CD8-positive, alpha-beta T cell (primary cell): ENCODE measurements at regions of chr20 and their contacts with region 1.

Region 1: DNA sequence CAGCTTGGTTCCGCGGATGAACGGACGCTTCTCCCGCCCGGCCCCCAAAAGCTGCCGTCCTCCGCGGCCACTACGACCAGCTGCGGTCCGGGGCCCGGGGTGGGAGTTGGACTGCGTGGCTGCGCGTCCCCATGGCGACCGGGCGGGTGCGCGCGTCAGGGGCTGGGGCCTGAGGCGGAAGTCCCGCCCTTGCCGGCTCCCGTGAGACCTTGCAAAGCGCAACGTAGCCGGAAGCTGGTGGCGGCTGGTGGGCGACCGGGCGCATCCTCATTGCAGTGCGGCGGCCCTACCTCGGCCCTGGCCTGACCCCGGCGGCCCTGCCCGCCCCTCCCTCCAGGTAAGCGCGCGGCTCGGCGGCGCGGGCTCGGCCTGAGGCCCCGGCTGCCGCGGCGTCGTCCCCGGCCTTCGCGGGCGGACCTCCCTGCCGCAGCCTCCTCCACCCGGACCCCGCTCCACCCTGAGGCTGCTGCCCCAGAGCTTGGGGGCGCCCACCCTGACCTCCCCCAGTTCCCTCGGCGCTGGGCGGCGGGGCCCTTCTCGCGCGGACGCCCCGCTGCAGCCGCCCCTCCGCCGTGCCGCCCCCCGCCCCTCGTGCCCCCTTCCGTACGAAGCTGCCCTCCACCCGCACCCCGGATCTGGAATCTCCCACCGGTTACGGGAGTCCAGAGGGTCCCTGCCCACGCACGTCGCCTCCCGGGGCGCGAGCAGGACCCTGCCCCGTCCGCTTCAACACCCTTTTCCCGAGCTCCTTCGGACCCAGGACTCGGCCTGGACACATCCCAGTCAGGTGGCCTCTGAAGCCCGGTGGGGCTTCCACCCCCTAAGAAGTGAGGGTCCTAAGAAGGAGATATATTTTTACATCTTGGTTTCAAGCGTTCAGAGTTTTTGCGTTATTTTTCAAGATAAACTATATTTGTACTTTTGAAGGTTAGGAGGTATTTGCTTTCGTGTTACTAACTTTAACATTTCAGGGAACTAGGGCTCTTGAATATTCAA is at the start of gene ARFGAP1:
- DNase-seq: peak; percentile 71 to 93 (median 89)
- ATAC-seq: peak; percentile 93
- H3K4me3 ChIP-seq: peak within 1 kb of the TSS; percentile 61 to 78
- H3K4me3 Mint-ChIP-seq: peak within 1 kb of the TSS; percentile 87
- H3K27ac ChIP-seq: peak within 1 kb of the TSS; percentile 54 to 63
- H3K27ac Mint-ChIP-seq: peak within 1 kb of the TSS; percentile 83
- H3K4me1 ChIP-seq: peaks cover 18% of the 10 kb centered on the region
- H3K4me1 Mint-ChIP-seq: peaks cover 35% of the 10 kb centered on the region
- H3K27me3 ChIP-seq: no peaks in the 10 kb centered on the region
- H3K27me3 Mint-ChIP-seq: no peaks in the 10 kb centered on the region
- CTCF ChIP-seq: no peak
- total RNA-seq, gene ARFGAP1: 121 to 123 TPM

Region 2: DNA sequence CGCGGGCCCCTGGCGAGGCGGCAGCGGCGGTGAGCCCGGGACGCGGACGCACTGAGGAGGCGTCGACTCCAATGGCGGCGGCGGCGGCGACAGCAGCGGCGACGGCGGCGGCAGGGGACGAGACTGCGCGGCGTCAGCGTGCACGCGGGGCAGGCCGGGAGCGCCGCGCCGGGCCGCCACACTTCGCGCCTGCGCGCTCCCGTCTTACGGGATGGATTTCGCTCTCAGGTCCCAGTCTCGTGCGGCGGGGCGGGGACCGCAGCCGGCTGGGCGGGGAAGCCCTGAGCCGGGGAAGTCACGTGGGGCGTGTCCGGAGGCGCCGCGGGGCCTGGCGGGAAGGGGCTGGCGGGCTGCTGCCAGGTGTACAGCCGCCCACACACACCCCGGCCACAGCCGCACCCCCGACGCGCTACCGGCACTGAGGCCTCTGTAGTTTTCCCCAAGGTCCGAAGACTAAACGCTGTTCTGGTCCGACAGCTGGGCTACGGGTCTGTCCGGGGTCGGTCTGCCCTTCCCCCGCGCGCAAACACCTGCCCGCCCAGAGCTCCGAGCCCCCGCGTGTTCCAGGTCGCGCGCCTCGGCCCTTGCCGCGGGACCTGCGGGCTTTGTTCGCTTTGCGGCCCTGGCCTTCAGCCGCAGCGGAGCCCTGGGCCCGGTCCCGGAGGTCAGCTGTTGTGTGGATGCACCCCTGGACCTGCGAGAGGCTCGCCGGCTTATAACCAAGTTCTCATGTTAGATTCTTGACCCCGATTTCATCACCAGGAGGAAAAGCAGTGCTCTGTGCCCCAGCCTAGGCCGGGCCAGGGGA is 56.6 kb before region 1 on chr20 and contains the start of gene YTHDF1:
- CTCF ChIA-PET with region 1: no interaction called
- POLR2A ChIA-PET with region 1: no interaction called
- intact Hi-C with region 1: loop called (anchors 1 kb)
- DNase-seq: peak; percentile 86 to 98 (median 95)
- ATAC-seq: peak; percentile 96
- H3K4me3 ChIP-seq: peak within 1 kb of the TSS; percentile 68 to 84
- H3K4me3 Mint-ChIP-seq: peak within 1 kb of the TSS; percentile 91
- H3K27ac ChIP-seq: peak within 1 kb of the TSS; percentile 73 to 74
- H3K27ac Mint-ChIP-seq: peak within 1 kb of the TSS; percentile 94
- H3K4me1 ChIP-seq: peaks cover 44% of the 10 kb centered on the region
- H3K4me1 Mint-ChIP-seq: peaks cover 44% of the 10 kb centered on the region
- H3K27me3 ChIP-seq: no peaks in the 10 kb centered on the region
- H3K27me3 Mint-ChIP-seq: peaks cover 2% of the 10 kb centered on the region
- CTCF ChIP-seq: no peak
- total RNA-seq, gene YTHDF1: 44.8 to 45.7 TPM

Region 3: GRCh38 chr20:64101731-64102621 is 829.1 kb after region 1 on chr20:
- CTCF ChIA-PET with region 1: no interaction called
- POLR2A ChIA-PET with region 1: no interaction called
- intact Hi-C with region 1: loop called in 1 of 2 experiments (anchors 5 kb)
- DNase-seq: peak; percentile 42 to 81 (median 69)
- ATAC-seq: peak; percentile 63
- H3K4me3 ChIP-seq: peak overlapping the region; percentile 8 to 39
- H3K4me3 Mint-ChIP-seq: peak overlapping the region; percentile 26
- H3K27ac ChIP-seq: no peak overlapping the region
- H3K27ac Mint-ChIP-seq: no peak overlapping the region
- H3K4me1 ChIP-seq: peaks cover 16% of the 10 kb centered on the region
- H3K4me1 Mint-ChIP-seq: peaks cover 23% of the 10 kb centered on the region
- H3K27me3 ChIP-seq: peaks cover 6 to 8% of the 10 kb centered on the region in 2 experiments
- H3K27me3 Mint-ChIP-seq: peaks cover 14% of the 10 kb centered on the region
- CTCF ChIP-seq: peak; percentile 85